MCF 10A (cell line): ENCODE measurements at regions of chr16 and their contacts with region 1.

Region 1: GRCh38 chr16:2752035-2752849 is at the start of gene SRRM2:
- DNase-seq: peak; percentile 95
- H3K4me3 Mint-ChIP-seq: peak within 1 kb of the TSS; percentile 89
- H3K27ac Mint-ChIP-seq: peak within 1 kb of the TSS; percentile 99
- H3K4me1 Mint-ChIP-seq: peaks cover 35% of the 10 kb centered on the region
- H3K27me3 Mint-ChIP-seq: no peaks in the 10 kb centered on the region
- CTCF ChIP-seq: no peak
- total RNA-seq, gene SRRM2: 710 and 779 TPM in 2 replicates

Region 2: DNA sequence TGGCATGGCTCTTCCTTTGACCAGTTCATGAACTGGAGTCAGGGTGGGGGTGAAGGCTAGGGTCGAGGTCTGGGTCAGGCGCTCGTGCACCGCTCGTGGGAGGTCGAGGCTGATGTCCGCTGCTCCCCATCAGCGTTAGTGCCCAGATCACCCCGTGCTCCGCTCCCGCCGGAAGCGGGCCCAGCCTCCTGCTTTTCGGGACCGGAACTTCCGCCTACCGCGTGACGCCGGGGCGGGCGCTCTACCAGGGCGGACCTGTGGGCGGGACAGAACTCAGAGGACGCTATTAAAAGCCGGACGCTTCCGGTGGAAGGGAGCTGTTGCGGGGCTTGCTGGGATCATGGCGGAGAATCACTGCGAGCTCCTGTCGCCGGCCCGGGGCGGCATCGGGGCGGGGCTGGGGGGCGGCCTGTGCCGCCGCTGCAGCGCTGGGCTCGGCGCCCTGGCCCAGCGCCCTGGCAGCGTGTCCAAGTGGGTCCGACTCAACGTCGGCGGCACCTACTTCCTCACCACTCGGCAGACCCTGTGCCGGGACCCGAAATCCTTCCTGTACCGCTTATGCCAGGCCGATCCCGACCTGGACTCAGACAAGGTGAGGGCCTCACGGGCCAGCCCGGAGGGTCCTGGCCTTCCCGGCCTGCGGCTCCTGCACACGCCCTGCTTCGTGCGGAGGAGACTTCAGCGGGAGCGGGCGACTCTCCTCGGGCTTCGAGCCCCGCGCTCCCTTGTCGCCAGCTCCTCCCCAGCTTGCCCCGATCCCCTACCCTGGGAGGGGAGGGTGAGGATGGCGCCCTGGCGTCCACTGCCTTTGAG is 69.8 kb before region 1 on chr16 and contains the start of gene KCTD5:
- CTCF ChIA-PET with region 1: no interaction called
- POLR2A ChIA-PET with region 1: interaction called, 24 read pairs
- intact Hi-C with region 1: no loop called
- DNase-seq: peak; percentile 94
- H3K4me3 Mint-ChIP-seq: peak within 1 kb of the TSS; percentile 96
- H3K27ac Mint-ChIP-seq: peak within 1 kb of the TSS; percentile 97
- H3K4me1 Mint-ChIP-seq: no peaks in the 10 kb centered on the region
- H3K27me3 Mint-ChIP-seq: no peaks in the 10 kb centered on the region
- CTCF ChIP-seq: no peak
- total RNA-seq, gene KCTD5: 49.4 and 51.6 TPM in 2 replicates

Region 3: GRCh38 chr16:2770057-2770951 is 18.1 kb after region 1 on chr16:
- CTCF ChIA-PET with region 1: interaction called, 15 read pairs
- POLR2A ChIA-PET with region 1: interaction called, 190 read pairs
- intact Hi-C with region 1: loop called (anchors 2 kb)
- DNase-seq: peak; percentile 52
- H3K4me3 Mint-ChIP-seq: peak overlapping the region; percentile 74
- H3K27ac Mint-ChIP-seq: peak overlapping the region; percentile 81
- H3K4me1 Mint-ChIP-seq: peaks cover 50% of the 10 kb centered on the region
- H3K27me3 Mint-ChIP-seq: no peaks in the 10 kb centered on the region
- CTCF ChIP-seq: peak; percentile 26

Region 4: GRCh38 chr16:2867987-2868789 is 115.9 kb after region 1 on chr16:
- CTCF ChIA-PET with region 1: interaction called, 7 read pairs
- POLR2A ChIA-PET with region 1: interaction called, 17 read pairs
- intact Hi-C with region 1: no loop called
- DNase-seq: peak; percentile 91
- H3K4me3 Mint-ChIP-seq: peak overlapping the region; percentile 89
- H3K27ac Mint-ChIP-seq: peak overlapping the region; percentile 94
- H3K4me1 Mint-ChIP-seq: peaks cover 4% of the 10 kb centered on the region
- H3K27me3 Mint-ChIP-seq: no peaks in the 10 kb centered on the region
- CTCF ChIP-seq: peak; percentile 94

Region 5: DNA sequence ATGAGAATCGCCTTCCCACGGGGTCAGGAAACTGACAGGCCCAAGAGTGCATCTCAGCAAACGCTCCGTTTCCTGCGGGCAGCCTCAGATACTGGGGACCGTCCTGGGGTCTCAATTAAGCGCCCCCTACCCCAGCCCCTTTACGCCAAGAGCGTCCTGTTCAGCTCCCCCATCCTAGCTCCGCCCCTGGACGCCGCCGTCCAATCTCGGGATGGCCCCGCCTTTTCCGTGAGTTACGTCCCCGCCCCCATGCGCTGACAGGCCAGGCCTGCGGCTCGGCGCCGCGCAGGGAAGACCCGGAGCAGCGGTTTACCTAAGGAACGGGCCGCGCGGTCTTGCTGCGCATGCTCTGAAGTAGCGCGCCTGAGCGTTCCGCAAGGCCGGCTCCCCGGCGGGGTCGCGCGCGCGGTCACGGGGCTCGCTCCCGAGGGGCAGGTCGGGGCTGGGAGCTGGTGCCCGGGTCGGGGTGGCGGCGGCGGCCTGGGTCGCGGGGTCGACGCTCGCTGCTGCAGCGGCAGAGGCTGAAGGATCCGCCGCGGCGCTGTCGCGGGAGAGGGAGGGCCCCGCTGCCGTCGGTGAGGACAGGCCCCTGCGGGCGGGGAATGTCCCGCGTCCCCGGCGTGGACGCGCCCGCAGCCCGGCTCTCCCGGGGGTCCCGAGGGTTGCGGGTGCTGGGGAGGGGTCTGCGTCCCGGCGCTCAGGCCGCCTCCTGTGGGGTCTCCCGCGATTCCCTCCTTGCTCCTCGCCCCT is 159.5 kb after region 1 on chr16 and contains the start of gene FLYWCH1:
- CTCF ChIA-PET with region 1: no interaction called
- POLR2A ChIA-PET with region 1: interaction called, 15 read pairs
- intact Hi-C with region 1: no loop called
- DNase-seq: peak; percentile 97
- H3K4me3 Mint-ChIP-seq: peak within 1 kb of the TSS; percentile 74
- H3K27ac Mint-ChIP-seq: peak within 1 kb of the TSS; percentile 81
- H3K4me1 Mint-ChIP-seq: peaks cover 19% of the 10 kb centered on the region
- H3K27me3 Mint-ChIP-seq: no peaks in the 10 kb centered on the region
- CTCF ChIP-seq: no peak
- total RNA-seq, gene FLYWCH1: 76.3 and 86.2 TPM in 2 replicates